Transverse colon (tissue), 4 donors: ENCODE measurements at regions of chr15 and their contacts with region 1.

Region 1: GRCh38 chr15:79184465-79184892 is 93.9 kb upstream of the RASGRF1 start:
- DNase-seq: peak; percentile 66
- H3K4me3 ChIP-seq: no peak overlapping the region
- H3K27ac ChIP-seq: no peak overlapping the region
- H3K4me1 ChIP-seq: no peaks in the 10 kb centered on the region
- H3K27me3 ChIP-seq: no peaks in the 10 kb centered on the region
- CTCF ChIP-seq: peak; percentile 85 to 98 (median 95)
- EP300 ChIP-seq: no peak
- POLR2A ChIP-seq: no peak

Region 2: DNA sequence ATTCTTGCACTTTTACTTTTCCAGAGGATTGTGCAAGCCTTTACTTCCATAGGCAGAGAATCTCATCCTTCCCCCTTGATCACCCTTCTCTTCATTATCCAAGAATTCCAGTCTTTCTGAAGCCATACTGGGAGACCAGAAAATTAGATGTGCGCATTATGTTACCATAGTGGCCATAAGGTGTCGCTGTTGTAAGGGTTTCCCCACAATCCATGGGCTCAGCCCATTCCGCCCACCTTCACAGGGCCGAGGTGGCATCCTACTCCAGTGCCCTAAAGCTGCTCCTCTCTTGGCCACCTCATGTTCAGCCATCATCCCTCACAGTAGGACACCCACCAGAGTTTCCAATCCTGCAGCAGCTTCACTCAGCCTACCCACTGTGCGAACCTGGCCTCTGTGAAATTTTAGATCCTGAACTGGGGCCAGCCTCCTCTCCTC is 274.7 kb before region 1 on chr15:
- in situ Hi-C with region 1: loop called in 3 of 4 experiments (anchors 25 kb)
- intact Hi-C with region 1: no loop called
- DNase-seq: no peak
- H3K4me3 ChIP-seq: no peak overlapping the region
- H3K27ac ChIP-seq: no peak overlapping the region
- H3K4me1 ChIP-seq: peaks cover 2 to 6% (median 3%) of the 10 kb centered on the region in 4 donors
- H3K27me3 ChIP-seq: no peaks in the 10 kb centered on the region
- CTCF ChIP-seq: peak; percentile 54 to 67 (median 62)
- EP300 ChIP-seq: no peak
- POLR2A ChIP-seq: no peak

Region 3: GRCh38 chr15:79028411-79028964 is 156.0 kb before region 1 on chr15:
- in situ Hi-C with region 1: loop called (anchors 5 to 10 kb)
- intact Hi-C with region 1: loop called (anchors 2 kb)
- DNase-seq: peak; percentile 26
- H3K4me3 ChIP-seq: no peak overlapping the region
- H3K27ac ChIP-seq: no peak overlapping the region
- H3K4me1 ChIP-seq: no peaks in the 10 kb centered on the region
- H3K27me3 ChIP-seq: no peaks in the 10 kb centered on the region
- CTCF ChIP-seq: peak; percentile 66 to 73 (median 70)
- EP300 ChIP-seq: no peak
- POLR2A ChIP-seq: no peak

Region 4: DNA sequence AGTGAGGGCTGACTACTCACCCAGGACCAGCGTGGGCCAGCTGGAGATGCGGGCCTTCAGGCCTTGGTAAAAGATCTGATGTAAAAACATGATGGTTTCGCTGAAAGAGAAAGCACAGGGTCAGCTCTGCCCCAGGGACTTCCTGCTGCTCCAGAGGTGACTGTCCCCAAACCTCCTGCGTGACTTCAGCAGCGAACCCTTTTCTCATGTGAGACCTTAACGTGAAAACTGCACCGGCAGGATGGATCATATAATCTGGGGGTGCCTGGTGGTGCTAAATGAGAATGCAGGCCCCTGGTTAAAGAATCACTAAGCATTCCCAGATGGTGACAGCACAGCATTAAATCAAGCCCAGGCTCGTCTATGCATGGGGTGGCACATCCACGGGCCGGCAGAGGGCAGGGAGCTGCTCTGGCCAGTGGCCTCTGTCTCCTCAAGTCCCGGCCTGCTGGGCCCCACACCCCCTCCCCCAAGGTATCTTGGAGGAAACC is 149.3 kb before region 1 on chr15:
- in situ Hi-C with region 1: loop called in 1 of 4 experiments (anchors 10 kb)
- intact Hi-C with region 1: no loop called
- DNase-seq: no peak
- H3K4me3 ChIP-seq: no peak overlapping the region
- H3K27ac ChIP-seq: no peak overlapping the region
- H3K4me1 ChIP-seq: no peaks in the 10 kb centered on the region
- H3K27me3 ChIP-seq: peaks cover 3% of the 10 kb centered on the region
- CTCF ChIP-seq: no peak
- EP300 ChIP-seq: no peak
- POLR2A ChIP-seq: no peak

Region 5: DNA sequence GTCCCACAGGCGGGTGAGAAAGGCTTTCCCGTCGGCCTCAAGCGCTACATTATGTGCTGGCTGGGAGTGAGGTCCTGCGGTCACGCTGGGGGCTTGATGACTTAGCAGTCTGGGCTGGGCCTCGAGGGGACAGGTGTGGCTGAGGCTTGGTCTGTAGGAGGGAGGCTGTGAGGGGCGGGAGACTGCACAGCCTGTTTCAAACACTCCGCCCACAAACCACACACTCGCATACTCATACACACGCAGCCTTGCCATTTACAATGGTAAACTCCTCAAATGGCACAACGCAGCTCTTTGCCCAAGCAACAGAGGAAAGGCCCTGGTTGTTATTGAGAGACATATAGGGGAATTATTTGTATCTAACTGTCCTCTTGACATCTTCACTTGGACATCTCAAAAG is 61.5 kb before region 1 on chr15:
- in situ Hi-C with region 1: no loop called
- intact Hi-C with region 1: no loop called
- DNase-seq: no peak
- H3K4me3 ChIP-seq: no peak overlapping the region
- H3K27ac ChIP-seq: no peak overlapping the region
- H3K4me1 ChIP-seq: no peaks in the 10 kb centered on the region
- H3K27me3 ChIP-seq: no peaks in the 10 kb centered on the region
- CTCF ChIP-seq: no peak
- EP300 ChIP-seq: no peak
- POLR2A ChIP-seq: no peak

Region 6: DNA sequence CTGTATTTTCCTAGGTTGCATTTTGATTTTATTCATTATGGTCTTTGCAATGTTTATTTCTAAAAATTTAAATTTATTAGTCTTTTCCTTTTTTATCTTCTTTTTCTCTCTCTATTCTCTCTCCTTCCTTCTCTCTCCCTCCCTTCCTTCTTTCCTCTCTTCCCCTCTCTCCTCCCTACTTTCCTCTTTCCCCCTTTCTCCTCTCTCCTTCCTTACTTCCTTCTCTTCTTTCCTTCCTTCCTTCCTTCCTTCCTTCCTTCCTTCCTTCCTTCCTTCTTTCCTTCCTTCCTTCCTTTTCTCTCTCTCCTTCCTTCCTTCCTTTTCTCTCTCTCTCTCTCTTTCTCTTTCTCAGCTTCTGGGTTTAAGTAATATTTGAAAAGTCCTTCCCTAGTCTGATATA is 21.1 kb before region 1 on chr15:
- in situ Hi-C with region 1: no loop called
- intact Hi-C with region 1: loop called (anchors 1 kb)
- DNase-seq: no peak
- H3K4me3 ChIP-seq: no peak overlapping the region
- H3K27ac ChIP-seq: no peak overlapping the region
- H3K4me1 ChIP-seq: no peaks in the 10 kb centered on the region
- H3K27me3 ChIP-seq: peaks cover 1% of the 10 kb centered on the region
- CTCF ChIP-seq: no peak
- EP300 ChIP-seq: no peak
- POLR2A ChIP-seq: no peak